Transverse colon (tissue), 4 donors: ENCODE measurements at regions of chr7 and their contacts with region 1.

Region 1: GRCh38 chr7:47332213-47332612 is 249.7 kb downstream of the TNS3 start:
- DNase-seq: no peak
- H3K4me3 ChIP-seq: no peak overlapping the region
- H3K27ac ChIP-seq: no peak overlapping the region
- H3K4me1 ChIP-seq: peaks cover 24 to 48% (median 34%) of the 10 kb centered on the region in 4 donors
- H3K27me3 ChIP-seq: no peaks in the 10 kb centered on the region
- CTCF ChIP-seq: no peak
- EP300 ChIP-seq: no peak
- POLR2A ChIP-seq: no peak

Region 2: DNA sequence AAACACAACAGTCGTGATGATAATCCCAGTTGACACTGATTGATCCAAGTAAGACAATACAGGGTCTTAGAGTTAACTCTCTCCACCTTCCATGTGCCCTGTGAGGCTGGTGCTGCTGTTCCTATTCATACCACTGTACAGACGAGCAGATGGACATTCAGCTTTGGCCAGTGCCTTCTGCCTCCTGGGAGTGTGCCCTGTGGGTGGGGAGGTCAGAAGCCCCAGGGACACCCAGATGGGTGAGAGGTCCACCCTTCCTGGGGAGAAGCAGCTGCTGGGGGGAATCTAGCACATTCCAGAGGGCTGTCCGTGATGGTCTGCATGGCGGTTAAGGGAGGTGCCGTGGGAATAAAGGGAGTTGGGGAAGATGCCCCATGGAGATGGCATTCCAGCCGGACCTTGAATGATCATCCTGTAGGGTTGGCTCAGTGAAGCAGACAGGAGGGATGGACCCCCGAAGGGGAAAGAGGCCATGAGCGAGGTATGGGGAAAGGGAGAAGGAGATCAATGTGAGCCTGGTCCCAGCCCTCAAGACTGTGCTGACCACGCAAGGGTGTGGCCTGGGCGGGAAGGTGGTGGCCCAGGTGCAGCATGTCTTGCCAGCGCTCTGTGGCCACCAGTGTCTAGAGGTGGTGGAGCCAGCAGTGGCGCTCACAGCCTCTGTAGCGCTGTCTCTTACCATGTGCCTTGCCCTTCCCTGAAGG is 1684.1 kb before region 1 on chr7:
- in situ Hi-C with region 1: no loop called
- intact Hi-C with region 1: no loop called
- DNase-seq: no peak
- H3K4me3 ChIP-seq: no peak overlapping the region
- H3K27ac ChIP-seq: no peak overlapping the region
- H3K4me1 ChIP-seq: no peaks in the 10 kb centered on the region
- H3K27me3 ChIP-seq: no peaks in the 10 kb centered on the region
- CTCF ChIP-seq: no peak
- EP300 ChIP-seq: no peak
- POLR2A ChIP-seq: no peak

Region 3: GRCh38 chr7:47371729-47372368 is 39.6 kb after region 1 on chr7:
- in situ Hi-C with region 1: no loop called
- intact Hi-C with region 1: loop called (anchors 5 kb)
- DNase-seq: peak; percentile 92
- H3K4me3 ChIP-seq: no peak overlapping the region
- H3K27ac ChIP-seq: peak overlapping the region; percentile 68 to 82 (median 76)
- H3K4me1 ChIP-seq: peaks cover 24 to 53% (median 28%) of the 10 kb centered on the region in 4 donors
- H3K27me3 ChIP-seq: no peaks in the 10 kb centered on the region
- CTCF ChIP-seq: no peak
- EP300 ChIP-seq: peak; percentile 69
- POLR2A ChIP-seq: peak; percentile 54